AG04450 (cell line): ENCODE measurements at regions of chr2 and their contacts with region 1.

Region 1: GRCh38 chr2:112941753-112942658 is 31.0 kb downstream of the IL37 start:
- DNase-seq: peak; percentile 50
- H3K4me3 ChIP-seq: no peak overlapping the region
- H3K27ac ChIP-seq: no peak overlapping the region
- H3K27me3 ChIP-seq: peaks cover 10% of the 10 kb centered on the region
- CTCF ChIP-seq: peak; percentile 98

Region 2: DNA sequence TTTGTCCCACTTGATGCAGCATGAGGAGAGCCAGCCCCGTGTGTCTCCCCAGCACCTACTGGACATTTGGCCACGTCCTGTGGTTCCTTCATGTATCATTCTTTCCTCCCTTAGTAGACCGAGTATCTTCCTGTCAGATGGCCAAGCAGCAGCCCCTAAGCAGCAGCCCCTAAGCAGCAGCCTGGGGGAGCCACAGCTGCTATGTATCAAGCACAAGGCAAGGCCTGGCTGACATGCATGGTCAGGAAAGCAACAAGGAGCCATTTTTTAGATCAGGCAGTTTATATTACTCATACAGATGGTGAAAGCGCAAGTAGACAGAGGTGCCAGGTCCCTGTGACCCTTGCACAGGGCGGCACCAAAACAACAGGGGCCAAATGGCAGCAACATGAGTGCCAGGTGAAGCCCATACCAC is 335.5 kb before region 1 on chr2:
- CTCF ChIA-PET with region 1: interaction called, 31 read pairs
- POLR2A ChIA-PET with region 1: no interaction called
- DNase-seq: no peak
- H3K4me3 ChIP-seq: no peak overlapping the region
- H3K27ac ChIP-seq: peak overlapping the region; percentile 21
- H3K27me3 ChIP-seq: no peaks in the 10 kb centered on the region
- CTCF ChIP-seq: no peak

Region 3: DNA sequence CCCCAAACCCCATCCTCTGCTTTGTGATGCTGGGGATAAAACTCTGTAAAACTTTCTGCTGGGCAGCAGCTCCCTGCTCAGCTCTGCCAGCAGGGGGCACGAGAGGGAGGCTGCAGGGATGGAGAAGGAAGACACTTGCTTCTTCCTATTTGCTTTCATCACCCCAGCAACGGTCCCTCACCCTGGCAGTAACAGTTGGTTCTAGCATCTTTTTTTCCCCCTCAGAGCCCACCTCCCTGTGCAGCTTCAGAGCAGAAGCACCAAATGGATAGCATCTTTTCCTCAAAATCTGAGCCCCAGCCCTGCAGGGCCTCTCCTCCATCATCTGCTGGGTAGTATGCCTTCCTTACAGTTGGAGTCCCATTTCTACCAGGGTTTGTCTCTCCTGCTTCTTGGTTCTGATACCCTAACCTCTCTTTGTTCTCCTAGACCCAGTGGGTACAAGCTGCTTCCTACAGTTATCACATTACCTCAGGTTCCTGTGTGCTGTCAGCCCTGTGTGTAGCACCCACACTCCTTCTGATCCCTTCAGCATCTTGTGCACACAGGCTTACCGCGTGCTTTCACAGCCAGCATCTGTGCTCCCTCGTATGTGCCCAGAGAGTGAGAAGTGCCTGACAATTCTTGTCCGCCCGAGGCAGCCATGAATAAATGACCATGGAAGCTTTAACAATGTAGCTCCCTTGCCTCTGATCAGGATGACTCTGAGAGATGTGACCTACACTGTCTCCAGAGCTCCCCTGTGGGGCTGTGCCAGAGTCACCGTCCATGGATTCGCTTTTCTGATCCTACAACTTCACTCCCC is 192.0 kb before region 1 on chr2:
- CTCF ChIA-PET with region 1: interaction called, 541 read pairs
- POLR2A ChIA-PET with region 1: no interaction called
- DNase-seq: peak; percentile 52
- H3K4me3 ChIP-seq: no peak overlapping the region
- H3K27ac ChIP-seq: peak overlapping the region; percentile 47
- H3K27me3 ChIP-seq: no peaks in the 10 kb centered on the region
- CTCF ChIP-seq: peak; percentile 99

Region 4: GRCh38 chr2:112831513-112831845 is 110.5 kb before region 1 on chr2:
- CTCF ChIA-PET with region 1: interaction called, 15 read pairs
- POLR2A ChIA-PET with region 1: no interaction called
- DNase-seq: no peak
- H3K4me3 ChIP-seq: no peak overlapping the region
- H3K27ac ChIP-seq: no peak overlapping the region
- H3K27me3 ChIP-seq: no peaks in the 10 kb centered on the region
- CTCF ChIP-seq: no peak

Region 5: GRCh38 chr2:112916625-112917247 is 25.3 kb before region 1 on chr2:
- CTCF ChIA-PET with region 1: interaction called, 10 read pairs
- POLR2A ChIA-PET with region 1: no interaction called
- DNase-seq: no peak
- H3K4me3 ChIP-seq: no peak overlapping the region
- H3K27ac ChIP-seq: no peak overlapping the region
- H3K27me3 ChIP-seq: peaks cover 6% of the 10 kb centered on the region
- CTCF ChIP-seq: no peak

Region 6: GRCh38 chr2:112973156-112973555 is 31.1 kb after region 1 on chr2:
- CTCF ChIA-PET with region 1: no interaction called
- POLR2A ChIA-PET with region 1: no interaction called
- DNase-seq: no peak
- H3K4me3 ChIP-seq: no peak overlapping the region
- H3K27ac ChIP-seq: no peak overlapping the region
- H3K27me3 ChIP-seq: peaks cover 4% of the 10 kb centered on the region
- CTCF ChIP-seq: no peak

Region 7: GRCh38 chr2:112985090-112985489 is 43.1 kb after region 1 on chr2:
- CTCF ChIA-PET with region 1: no interaction called
- POLR2A ChIA-PET with region 1: no interaction called
- DNase-seq: no peak
- H3K4me3 ChIP-seq: no peak overlapping the region
- H3K27ac ChIP-seq: no peak overlapping the region
- H3K27me3 ChIP-seq: peaks cover 4% of the 10 kb centered on the region
- CTCF ChIP-seq: no peak

Region 8: DNA sequence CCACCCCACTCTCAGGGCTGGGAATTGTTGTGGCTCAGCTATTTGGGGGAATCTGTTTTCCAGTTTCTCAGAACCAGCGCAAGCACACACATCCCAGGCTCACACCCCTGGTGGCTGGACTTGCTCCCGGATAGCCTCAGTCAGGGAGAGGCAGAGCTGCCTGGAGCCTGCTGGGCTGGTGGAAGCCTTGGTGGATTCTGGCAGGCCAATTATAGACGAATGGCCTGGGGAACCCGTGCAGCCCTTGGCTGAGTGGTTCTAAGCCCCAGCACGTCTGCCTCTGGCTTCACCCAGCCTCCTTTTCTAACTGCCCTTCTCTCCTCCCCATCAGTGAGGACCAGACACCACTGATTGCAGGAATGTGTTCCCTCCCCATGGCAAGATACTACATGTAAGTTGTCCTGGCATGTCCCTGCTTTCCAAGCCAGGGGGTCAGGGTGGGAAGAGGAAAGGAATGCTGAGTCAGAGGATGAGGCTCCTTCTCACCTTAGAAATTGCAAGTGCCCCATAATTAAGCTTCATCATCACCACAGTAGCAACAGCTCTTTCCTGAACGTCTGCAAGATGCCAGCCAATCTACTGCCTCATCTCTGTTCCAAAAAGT is 130.5 kb after region 1 on chr2:
- CTCF ChIA-PET with region 1: interaction called, 10 read pairs
- POLR2A ChIA-PET with region 1: no interaction called
- DNase-seq: no peak
- H3K4me3 ChIP-seq: no peak overlapping the region
- H3K27ac ChIP-seq: no peak overlapping the region
- H3K27me3 ChIP-seq: peaks cover 12% of the 10 kb centered on the region
- CTCF ChIP-seq: no peak

Region 9: DNA sequence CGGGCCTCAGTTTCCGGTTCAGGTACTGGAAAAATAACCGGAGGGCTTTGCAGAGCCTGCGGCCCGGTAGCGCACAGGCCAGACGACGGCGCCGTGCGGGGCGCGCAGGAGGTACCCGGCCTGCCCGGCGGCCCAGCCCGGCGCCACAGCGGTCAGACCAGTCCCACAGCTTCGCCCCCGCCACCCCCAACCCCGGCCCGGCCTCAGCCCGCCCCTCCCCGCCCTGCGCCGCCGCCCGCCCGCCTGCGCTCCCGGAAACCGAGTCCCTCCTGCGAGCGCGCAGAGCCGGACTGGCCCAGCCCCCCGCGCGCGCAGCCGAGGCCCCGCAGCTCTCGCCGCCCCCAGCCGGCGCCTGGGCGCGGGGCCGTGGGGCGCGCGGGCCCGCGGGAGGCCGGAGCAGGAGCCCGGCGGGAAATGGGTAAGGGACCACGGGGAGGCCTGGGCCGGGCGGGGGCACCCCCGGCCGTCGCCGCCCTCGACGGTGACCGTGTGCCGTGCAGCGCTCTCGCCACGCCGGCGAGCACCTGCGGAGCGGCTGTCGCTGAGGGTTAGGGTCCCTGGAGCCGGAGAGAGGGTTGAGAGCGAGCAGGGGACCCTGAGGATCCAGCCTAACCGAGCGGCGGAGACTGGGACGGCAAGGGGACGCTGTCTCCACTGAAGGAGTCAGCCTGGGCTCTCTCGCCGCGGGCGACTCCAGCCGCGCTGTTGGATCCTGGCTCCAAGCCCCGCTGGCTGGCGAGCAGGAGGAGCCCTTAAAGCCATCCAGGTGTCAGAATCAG is 215.3 kb after region 1 on chr2:
- CTCF ChIA-PET with region 1: no interaction called
- POLR2A ChIA-PET with region 1: no interaction called
- DNase-seq: no peak
- H3K4me3 ChIP-seq: peak overlapping the region; percentile 35
- H3K27ac ChIP-seq: no peak overlapping the region
- H3K27me3 ChIP-seq: peaks cover 30% of the 10 kb centered on the region
- CTCF ChIP-seq: no peak